ENCODE measurements at regions of chr2 and their contacts with region 1.

Region 1: DNA sequence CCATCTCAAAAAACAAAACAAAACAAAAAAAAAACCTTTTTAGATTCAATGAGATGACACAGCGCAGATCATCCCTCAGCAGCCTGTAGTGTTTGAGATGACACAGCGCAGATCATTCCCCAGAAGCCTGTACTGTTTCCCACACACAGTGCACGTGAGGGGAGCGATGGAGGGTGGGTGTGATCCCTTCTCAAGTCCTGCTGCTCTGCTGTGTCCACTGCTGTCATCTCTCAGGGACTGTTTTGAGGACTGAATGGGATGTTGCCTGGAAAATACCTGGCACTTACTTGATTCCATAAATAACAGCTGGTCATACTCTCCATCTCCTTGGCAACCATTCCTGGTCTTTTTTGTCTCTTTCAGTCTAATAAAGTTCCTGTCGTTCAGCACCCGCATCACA is 25.7 kb downstream of the TGOLN2 start:
- DNase-seq: no peak
- H3K4me3 Mint-ChIP-seq: no peak overlapping the region
- H3K27ac Mint-ChIP-seq: no peak overlapping the region
- H3K4me1 Mint-ChIP-seq: peaks cover 6% of the 10 kb centered on the region
- H3K27me3 Mint-ChIP-seq: peaks cover 4% of the 10 kb centered on the region

Region 2: DNA sequence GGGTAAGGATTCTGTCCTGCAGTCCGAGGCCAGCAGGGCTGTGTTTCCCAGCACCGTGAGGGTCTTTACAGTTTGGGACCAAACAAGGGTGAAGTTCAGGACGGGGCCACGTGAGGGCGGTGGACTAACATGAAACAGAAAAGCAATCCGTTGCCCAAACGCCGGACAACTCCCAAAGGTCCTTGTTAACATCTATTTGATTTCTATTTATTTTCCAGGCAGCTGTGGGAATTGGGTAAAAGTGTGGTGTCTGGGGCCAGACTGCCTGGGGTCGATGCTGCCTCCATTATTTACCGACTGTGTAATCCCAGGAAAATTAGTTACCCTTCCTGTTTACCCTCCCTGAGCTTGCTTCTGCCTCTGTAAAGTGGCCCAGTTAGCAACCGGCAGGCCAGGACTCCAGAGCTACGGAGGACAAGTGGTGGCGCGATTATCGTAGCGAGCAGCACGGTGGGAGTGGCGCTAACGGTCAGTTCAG is 235.2 kb before region 1 on chr2:
- CTCF ChIA-PET with region 1: interaction called, 40 read pairs
- POLR2A ChIA-PET with region 1: no interaction called
- intact Hi-C with region 1: loop called (anchors 1 kb)
- DNase-seq: peak; percentile 66
- H3K4me3 Mint-ChIP-seq: no peak overlapping the region
- H3K27ac Mint-ChIP-seq: no peak overlapping the region
- H3K4me1 Mint-ChIP-seq: peaks cover 4% of the 10 kb centered on the region
- H3K27me3 Mint-ChIP-seq: peaks cover 19% of the 10 kb centered on the region

Region 3: DNA sequence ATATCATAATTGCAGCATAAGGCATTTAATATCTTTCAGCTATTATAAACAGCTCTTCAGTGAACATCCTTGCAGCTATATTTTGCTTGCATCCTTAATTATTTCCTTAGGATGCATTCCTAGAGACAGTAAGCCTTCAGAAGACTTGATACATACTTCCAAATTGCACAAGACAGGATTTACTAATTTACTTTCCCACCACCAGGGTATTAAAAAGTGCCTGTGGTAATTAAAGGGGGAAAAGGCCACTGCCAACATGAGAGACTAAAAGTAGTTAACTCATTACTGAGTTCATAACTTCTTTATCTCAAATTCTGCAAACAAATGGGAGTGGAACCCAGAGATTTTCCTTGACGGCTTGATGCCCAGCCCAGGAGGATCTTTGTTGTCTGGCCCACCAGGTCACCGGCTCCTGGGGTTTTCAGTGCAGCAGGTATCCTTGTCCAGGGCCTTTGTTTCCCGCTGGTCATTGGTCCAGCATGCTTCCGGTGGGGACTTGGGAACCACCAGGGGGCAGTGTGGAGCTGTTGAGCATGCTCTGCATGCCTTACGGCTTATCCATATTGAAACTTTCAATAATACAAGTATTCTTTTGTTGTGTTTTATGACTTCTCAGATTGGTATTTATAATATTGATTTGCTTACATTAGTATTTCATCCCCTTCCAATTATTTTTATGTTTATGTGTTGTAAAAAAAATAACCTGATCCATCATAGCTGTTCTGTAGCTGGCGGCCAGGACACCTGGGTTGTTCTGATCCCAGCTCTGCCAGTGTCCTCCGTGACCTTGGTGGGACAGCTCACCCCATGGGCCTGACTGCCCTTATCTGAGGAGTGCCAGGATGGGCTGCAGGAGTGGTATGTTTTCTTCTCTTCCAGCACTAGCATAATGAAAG is 35.7 kb before region 1 on chr2:
- CTCF ChIA-PET with region 1: interaction called, 135 read pairs
- POLR2A ChIA-PET with region 1: no interaction called
- intact Hi-C with region 1: loop called (anchors 1 kb)
- DNase-seq: peak; percentile 80
- H3K4me3 Mint-ChIP-seq: no peak overlapping the region
- H3K27ac Mint-ChIP-seq: no peak overlapping the region
- H3K4me1 Mint-ChIP-seq: no peaks in the 10 kb centered on the region
- H3K27me3 Mint-ChIP-seq: no peaks in the 10 kb centered on the region

Region 4: DNA sequence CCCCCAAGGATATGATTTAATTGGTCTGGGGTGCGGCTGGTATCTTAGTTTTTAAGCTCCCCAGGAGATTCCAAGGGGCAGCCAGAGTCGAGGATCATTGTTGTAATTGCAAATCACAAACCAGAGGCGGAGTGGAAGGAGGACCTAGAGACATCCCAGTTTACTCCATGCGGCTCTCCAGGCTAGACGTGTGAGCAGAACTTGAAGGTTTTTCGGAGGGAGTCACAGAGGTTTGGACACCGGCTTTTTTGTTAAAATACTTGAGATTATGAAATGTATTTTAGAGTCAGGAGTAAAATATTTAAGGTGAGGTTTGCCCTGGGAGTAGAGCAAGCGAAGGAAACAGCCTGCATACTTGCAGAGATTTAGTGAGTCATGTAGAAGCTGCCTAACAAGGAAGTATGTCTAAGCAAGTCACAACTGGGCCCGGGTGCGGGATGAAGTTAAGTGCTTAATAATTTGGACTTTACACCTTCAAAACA is 13.8 kb before region 1 on chr2:
- CTCF ChIA-PET with region 1: interaction called, 45 read pairs
- POLR2A ChIA-PET with region 1: no interaction called
- intact Hi-C with region 1: loop called (anchors 1 kb)
- DNase-seq: no peak
- H3K4me3 Mint-ChIP-seq: no peak overlapping the region
- H3K27ac Mint-ChIP-seq: no peak overlapping the region
- H3K4me1 Mint-ChIP-seq: peaks cover 16% of the 10 kb centered on the region
- H3K27me3 Mint-ChIP-seq: no peaks in the 10 kb centered on the region

Region 5: GRCh38 chr2:85327822-85328617 is 25.9 kb after region 1 on chr2 and contains the start of gene TGOLN2:
- CTCF ChIA-PET with region 1: interaction called, 10 read pairs
- POLR2A ChIA-PET with region 1: interaction called, 11 read pairs
- intact Hi-C with region 1: no loop called
- DNase-seq: peak; percentile 95
- H3K4me3 Mint-ChIP-seq: peak within 1 kb of the TSS; percentile 98
- H3K27ac Mint-ChIP-seq: peak within 1 kb of the TSS; percentile 99
- H3K4me1 Mint-ChIP-seq: peaks cover 40% of the 10 kb centered on the region
- H3K27me3 Mint-ChIP-seq: no peaks in the 10 kb centered on the region
- total RNA-seq, gene TGOLN2: 84.8 to 85.9 TPM